Mucosa of descending colon (tissue), 3 donors: ENCODE measurements at regions of chr7 and their contacts with region 1.

Region 1: DNA sequence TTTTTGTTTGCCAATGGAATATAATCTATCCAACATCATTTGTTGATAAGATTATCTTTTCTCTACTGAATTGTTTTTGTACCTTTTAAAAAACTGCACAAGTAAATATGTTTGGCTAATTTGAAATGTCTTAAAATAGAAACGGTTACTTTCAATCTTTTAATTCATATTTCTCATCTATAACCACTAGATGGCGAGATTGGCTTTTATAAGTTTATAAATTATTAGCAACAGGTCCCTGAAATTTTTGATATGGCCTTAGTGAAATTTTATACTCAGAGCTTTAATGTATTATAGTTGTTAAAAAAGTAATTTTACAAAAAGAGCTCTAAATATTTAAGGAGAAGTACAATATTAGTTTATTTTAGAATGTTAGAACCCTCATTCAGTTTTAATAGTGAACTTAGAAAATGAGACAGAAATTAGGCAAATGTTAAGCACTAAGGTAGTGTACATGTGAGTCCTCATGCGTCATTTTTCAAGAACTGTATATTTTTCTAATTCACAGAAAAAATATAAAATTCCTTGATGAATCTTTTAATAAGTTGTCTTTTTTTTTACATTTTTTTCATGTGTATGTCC is 592.5 kb downstream of the ARL4A start:
- DNase-seq: no peak
- ATAC-seq: no peak
- H3K4me3 ChIP-seq: no peak overlapping the region
- H3K4me1 ChIP-seq: no peaks in the 10 kb centered on the region
- CTCF ChIP-seq: no peak

Region 2: GRCh38 chr7:14687777-14688176 is 1407.8 kb after region 1 on chr7:
- intact Hi-C with region 1: loop called in 1 of 2 experiments (anchors 10 kb)
- DNase-seq: no peak
- ATAC-seq: no peak
- H3K4me3 ChIP-seq: no peak overlapping the region
- H3K4me1 ChIP-seq: no peaks in the 10 kb centered on the region
- CTCF ChIP-seq: no peak

Region 3: DNA sequence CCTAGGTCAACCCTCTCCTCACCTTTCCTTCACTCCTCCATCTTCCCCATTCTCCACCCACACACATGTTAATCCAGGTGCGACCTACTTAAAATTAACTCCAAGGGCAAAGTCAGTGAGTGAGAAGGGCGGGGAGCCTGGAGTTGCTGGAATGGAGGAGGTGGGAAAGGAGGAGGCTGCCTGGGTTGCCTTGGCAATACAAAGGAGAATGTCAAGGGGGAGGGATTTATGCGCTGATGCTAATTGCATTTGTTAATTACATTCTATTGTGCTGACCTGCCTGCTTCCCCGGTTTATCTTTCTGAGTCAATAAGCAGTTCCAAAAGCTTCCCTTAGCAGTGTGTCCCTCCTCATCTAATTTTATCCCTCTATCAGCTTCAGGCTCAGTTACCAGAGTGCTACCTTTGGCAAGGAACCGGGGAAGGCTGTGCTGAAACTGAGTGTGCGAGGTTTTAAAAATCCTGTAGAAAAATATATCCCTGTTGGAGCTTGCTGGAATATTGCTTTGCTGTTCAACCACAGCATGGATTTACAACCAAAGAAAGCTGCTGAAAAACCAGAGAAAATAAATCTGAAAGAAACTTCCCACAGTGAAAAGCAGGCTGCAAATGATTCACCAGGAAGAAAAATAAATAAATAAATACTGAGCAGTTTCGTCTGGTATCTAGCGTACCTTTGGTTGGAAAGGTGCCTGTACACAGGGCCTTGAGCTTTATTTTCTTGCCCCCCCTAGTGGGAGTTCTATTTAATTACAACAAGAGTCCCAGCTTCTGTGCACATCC is 1735.8 kb after region 1 on chr7:
- intact Hi-C with region 1: loop called in 1 of 2 experiments (anchors 10 kb)
- DNase-seq: peak in 2 of 3 donors; percentile 21 to 38
- ATAC-seq: peak; percentile 93
- H3K4me3 ChIP-seq: no peak overlapping the region
- H3K4me1 ChIP-seq: peaks cover 6% of the 10 kb centered on the region
- CTCF ChIP-seq: peak; percentile 38